Naive thymus-derived CD4-positive, alpha-beta T cell (primary cell): ENCODE measurements at regions of chr19 and their contacts with region 1.

Region 1: DNA sequence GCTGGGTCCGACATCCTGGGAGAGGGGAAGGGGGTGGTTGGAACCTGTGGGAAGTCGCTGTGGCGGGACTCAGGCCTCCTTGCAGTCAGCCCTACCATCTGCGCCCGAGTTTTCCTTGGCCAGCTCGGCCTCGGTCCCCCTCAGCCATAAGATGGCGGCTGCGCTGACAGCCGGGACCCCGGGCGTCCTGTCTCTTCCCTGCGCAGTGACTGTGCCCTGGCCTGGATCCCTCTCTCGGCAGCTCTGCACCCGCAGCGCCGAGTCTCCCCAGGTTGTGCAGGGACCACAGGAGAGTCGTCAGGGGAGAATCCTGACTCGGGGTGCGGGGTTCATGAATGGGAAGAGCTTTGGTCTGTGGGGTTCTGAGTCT is 345 bp downstream of the ZNF257 start:
- DNase-seq: no peak
- ATAC-seq: peak; percentile 44
- H3K4me3 ChIP-seq: peak overlapping the region; percentile 76
- H3K4me3 Mint-ChIP-seq: peak overlapping the region; percentile 89 to 96 (median 94)
- H3K27ac ChIP-seq: peak overlapping the region; percentile 72
- H3K27ac Mint-ChIP-seq: peak overlapping the region; percentile 65 to 92 (median 88)
- H3K4me1 ChIP-seq: no peaks in the 10 kb centered on the region
- H3K4me1 Mint-ChIP-seq: peaks cover 0 to 14% (median 0%) of the 10 kb centered on the region in 7 donors
- H3K27me3 ChIP-seq: no peaks in the 10 kb centered on the region
- H3K27me3 Mint-ChIP-seq: no peaks in the 10 kb centered on the region

Region 2: DNA sequence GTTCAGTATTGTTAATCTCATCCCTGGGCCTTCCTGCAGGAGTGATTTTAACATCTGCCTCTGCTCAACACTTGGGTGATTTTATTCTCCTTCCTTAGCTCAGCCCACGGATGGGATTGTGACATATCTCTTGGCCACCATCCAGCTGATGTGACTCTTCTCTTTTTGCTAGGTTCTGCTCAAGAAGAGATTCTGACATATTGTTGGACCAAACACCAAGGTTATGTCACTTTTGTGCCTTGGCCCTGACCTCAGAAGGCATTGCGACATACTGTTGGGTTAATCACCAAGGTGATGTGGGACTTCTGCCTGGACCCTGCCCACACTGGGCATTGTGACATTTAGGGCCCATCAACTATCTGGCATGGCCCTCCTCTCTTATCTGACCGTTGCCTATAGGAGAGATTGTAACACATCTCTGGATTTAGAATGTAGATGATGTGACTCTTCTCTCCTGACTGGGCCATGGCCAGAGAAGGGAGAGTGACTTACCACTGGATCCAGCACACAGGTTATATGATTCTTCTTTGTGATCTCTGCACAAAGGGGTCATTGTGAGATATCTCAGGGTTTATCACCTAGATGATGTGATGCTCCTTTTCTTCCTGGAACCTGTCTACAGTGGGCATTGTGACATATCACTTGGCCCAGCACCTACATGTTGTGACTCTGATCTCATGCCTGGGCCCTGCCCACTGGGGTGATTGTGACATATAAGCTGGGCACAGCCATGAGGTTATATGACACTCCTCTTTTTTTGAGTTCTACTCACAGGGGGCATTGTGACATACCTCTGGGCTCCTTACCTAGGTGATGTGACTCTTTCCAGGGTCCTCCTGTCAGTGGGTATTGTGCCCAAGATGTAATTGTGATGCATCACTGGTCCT is 458.5 kb before region 1 on chr19:
- CTCF ChIA-PET with region 1: no interaction called
- POLR2A ChIA-PET with region 1: no interaction called
- intact Hi-C with region 1: no loop called
- DNase-seq: no peak
- ATAC-seq: peak; percentile 72
- H3K4me3 ChIP-seq: no peak overlapping the region
- H3K4me3 Mint-ChIP-seq: no peak overlapping the region
- H3K27ac ChIP-seq: no peak overlapping the region
- H3K27ac Mint-ChIP-seq: no peak overlapping the region
- H3K4me1 ChIP-seq: no peaks in the 10 kb centered on the region
- H3K4me1 Mint-ChIP-seq: peaks cover 0 to 10% (median 4%) of the 10 kb centered on the region in 7 donors
- H3K27me3 ChIP-seq: no peaks in the 10 kb centered on the region
- H3K27me3 Mint-ChIP-seq: peaks cover 0 to 4% (median 0%) of the 10 kb centered on the region in 5 donors

Region 3: GRCh38 chr19:21851596-21852345 is 200.9 kb before region 1 on chr19:
- CTCF ChIA-PET with region 1: no interaction called
- POLR2A ChIA-PET with region 1: interaction called, 7 read pairs
- intact Hi-C with region 1: loop called in 1 of 2 experiments (anchors 5 kb)
- DNase-seq: peak; percentile 71 to 90 (median 88)
- ATAC-seq: peak; percentile 99
- H3K4me3 ChIP-seq: peak overlapping the region; percentile 98
- H3K4me3 Mint-ChIP-seq: peak overlapping the region; percentile 89 to 96 (median 92)
- H3K27ac ChIP-seq: peak overlapping the region; percentile 90
- H3K27ac Mint-ChIP-seq: peak overlapping the region; percentile 68 to 96 (median 92)
- H3K4me1 ChIP-seq: peaks cover 6 to 10% of the 10 kb centered on the region in 2 donors
- H3K4me1 Mint-ChIP-seq: peaks cover 8 to 34% (median 27%) of the 10 kb centered on the region in 7 donors
- H3K27me3 ChIP-seq: no peaks in the 10 kb centered on the region
- H3K27me3 Mint-ChIP-seq: peaks cover 0 to 1% (median 0%) of the 10 kb centered on the region in 5 donors

Region 4: GRCh38 chr19:21934146-21934545 is 118.5 kb before region 1 on chr19:
- CTCF ChIA-PET with region 1: no interaction called
- POLR2A ChIA-PET with region 1: no interaction called
- intact Hi-C with region 1: no loop called
- DNase-seq: no peak
- ATAC-seq: no peak
- H3K4me3 ChIP-seq: no peak overlapping the region
- H3K4me3 Mint-ChIP-seq: no peak overlapping the region
- H3K27ac ChIP-seq: no peak overlapping the region
- H3K27ac Mint-ChIP-seq: no peak overlapping the region
- H3K4me1 ChIP-seq: no peaks in the 10 kb centered on the region
- H3K4me1 Mint-ChIP-seq: no peaks in the 10 kb centered on the region
- H3K27me3 ChIP-seq: no peaks in the 10 kb centered on the region
- H3K27me3 Mint-ChIP-seq: no peaks in the 10 kb centered on the region

Region 5: GRCh38 chr19:22634450-22634827 is 581.8 kb after region 1 on chr19:
- CTCF ChIA-PET with region 1: no interaction called
- POLR2A ChIA-PET with region 1: no interaction called
- intact Hi-C with region 1: loop called in 1 of 2 experiments (anchors 2 kb)
- DNase-seq: no peak
- ATAC-seq: no peak
- H3K4me3 ChIP-seq: peak overlapping the region; percentile 63
- H3K4me3 Mint-ChIP-seq: peak overlapping the region; percentile 70 to 98 (median 93)
- H3K27ac ChIP-seq: peak overlapping the region; percentile 55
- H3K27ac Mint-ChIP-seq: peak overlapping the region in 8 of 9 donors; percentile 59 to 95 (median 82)
- H3K4me1 ChIP-seq: no peaks in the 10 kb centered on the region
- H3K4me1 Mint-ChIP-seq: peaks cover 0 to 16% (median 5%) of the 10 kb centered on the region in 7 donors
- H3K27me3 ChIP-seq: no peaks in the 10 kb centered on the region
- H3K27me3 Mint-ChIP-seq: no peaks in the 10 kb centered on the region

Region 6: GRCh38 chr19:23249911-23250649 is 1197.5 kb after region 1 on chr19 and contains the start of gene ZNF724:
- CTCF ChIA-PET with region 1: no interaction called
- POLR2A ChIA-PET with region 1: no interaction called
- intact Hi-C with region 1: loop called in 1 of 2 experiments (anchors 2 kb)
- DNase-seq: peak; percentile 66 to 91 (median 88)
- ATAC-seq: peak; percentile 100
- H3K4me3 ChIP-seq: peak within 1 kb of the TSS; percentile 84
- H3K4me3 Mint-ChIP-seq: peak within 1 kb of the TSS; percentile 95 to 99 (median 96)
- H3K27ac ChIP-seq: peak within 1 kb of the TSS; percentile 72
- H3K27ac Mint-ChIP-seq: peak within 1 kb of the TSS; percentile 61 to 96 (median 89)
- H3K4me1 ChIP-seq: peaks cover 0 to 6% of the 10 kb centered on the region in 2 donors
- H3K4me1 Mint-ChIP-seq: peaks cover 6 to 22% (median 10%) of the 10 kb centered on the region in 7 donors
- H3K27me3 ChIP-seq: no peaks in the 10 kb centered on the region
- H3K27me3 Mint-ChIP-seq: no peaks in the 10 kb centered on the region
- total RNA-seq, gene ZNF724: 2.9 to 11.3 (median 6.8) TPM